Left ventricle myocardium superior (tissue), 1 donor: ENCODE measurements at regions of chr12 and their contacts with region 1.

Region 1: GRCh38 chr12:120356567-120357030 is 12.4 kb downstream of the MSI1 start:
- DNase-seq: peak; percentile 77
- ATAC-seq: peak; percentile 95

Region 2: GRCh38 chr12:120413901-120414695 is 57.5 kb after region 1 on chr12:
- intact Hi-C with region 1: loop called (anchors 5 kb)
- DNase-seq: peak; percentile 46
- ATAC-seq: peak; percentile 89

Region 3: DNA sequence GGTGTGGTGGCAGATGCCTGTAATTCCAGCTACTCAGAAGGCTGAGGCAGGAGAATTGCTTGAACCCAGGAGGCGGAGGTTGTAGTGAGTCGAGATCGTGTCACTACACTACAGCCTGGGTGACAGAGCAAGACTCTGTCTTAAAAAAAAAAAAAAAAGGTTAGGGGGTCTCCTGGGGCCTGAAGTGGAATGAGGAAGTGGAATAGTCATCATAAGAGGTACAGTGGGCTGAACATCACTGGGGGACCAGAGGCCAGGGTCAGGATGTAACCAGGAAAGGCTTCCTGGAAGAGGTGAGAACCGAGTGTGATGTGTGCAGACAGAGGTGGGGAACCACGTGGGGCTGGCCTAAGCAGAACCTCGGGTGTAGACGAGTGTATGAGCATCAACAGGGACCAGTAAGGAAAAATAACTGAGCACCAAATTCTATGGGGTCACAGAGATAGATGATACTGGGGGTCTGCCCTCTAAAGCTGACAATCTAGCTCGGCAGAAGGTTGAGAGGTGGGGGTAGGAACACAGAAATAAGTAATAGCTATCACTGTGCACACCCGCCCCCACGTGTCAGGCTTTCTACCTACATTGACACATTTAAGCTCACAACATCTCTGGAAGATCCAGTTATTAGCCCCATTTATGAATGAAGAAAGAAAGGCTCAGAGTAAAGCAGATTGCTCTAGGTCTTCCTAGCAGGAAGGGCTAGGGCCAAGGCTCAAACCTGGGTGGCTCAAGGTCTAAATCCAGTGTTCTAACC is 76.3 kb after region 1 on chr12:
- intact Hi-C with region 1: loop called (anchors 5 kb)
- DNase-seq: no peak
- ATAC-seq: no peak